Activated T-helper 1 cell treated with anti-CD3 and anti-CD28 coated beads, Interleukin-12 subunit alpha, Interleukin-12 subunit beta, Interleukin-2, Interleukin-4 antibody, amounts not matched to agents 30 ng/mL and 10 ng/mL and 1 ng/mL, durations not matched to agents 14 hours and 24 hours and 36 hours (primary cell): ENCODE measurements at regions of chr11 and their contacts with region 1.

Region 1: GRCh38 chr11:124758317-124759203 is 3.5 kb downstream of the ESAM start:
- DNase-seq: peak; percentile 59
- H3K4me3 Mint-ChIP-seq: peak overlapping the region; percentile 61
- H3K27ac Mint-ChIP-seq: no peak overlapping the region
- H3K4me1 Mint-ChIP-seq: peaks cover 19% of the 10 kb centered on the region
- H3K27me3 Mint-ChIP-seq: peaks cover 57% of the 10 kb centered on the region

Region 2: DNA sequence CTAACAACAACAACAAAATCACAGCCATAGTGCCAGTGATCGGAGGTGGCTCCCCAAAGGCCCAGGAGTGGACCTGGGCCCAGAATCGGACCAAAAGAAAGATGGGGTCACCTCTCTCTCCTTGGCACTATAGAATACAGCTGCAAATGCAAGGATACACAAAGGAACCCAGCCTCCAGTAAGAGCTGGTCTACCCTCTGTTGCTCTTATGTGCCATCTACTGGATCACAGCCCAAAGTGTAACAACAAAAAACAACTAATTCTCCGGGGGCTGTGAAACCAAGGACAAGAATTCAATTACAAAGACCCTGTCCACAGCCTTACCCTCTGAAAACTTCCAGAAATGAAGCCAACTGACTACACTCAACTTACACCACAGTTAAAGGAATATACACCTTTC is 480.8 kb before region 1 on chr11:
- intact Hi-C with region 1: no loop called
- DNase-seq: no peak
- H3K4me3 Mint-ChIP-seq: no peak overlapping the region
- H3K27ac Mint-ChIP-seq: no peak overlapping the region
- H3K4me1 Mint-ChIP-seq: peaks cover 8% of the 10 kb centered on the region
- H3K27me3 Mint-ChIP-seq: no peaks in the 10 kb centered on the region

Region 3: DNA sequence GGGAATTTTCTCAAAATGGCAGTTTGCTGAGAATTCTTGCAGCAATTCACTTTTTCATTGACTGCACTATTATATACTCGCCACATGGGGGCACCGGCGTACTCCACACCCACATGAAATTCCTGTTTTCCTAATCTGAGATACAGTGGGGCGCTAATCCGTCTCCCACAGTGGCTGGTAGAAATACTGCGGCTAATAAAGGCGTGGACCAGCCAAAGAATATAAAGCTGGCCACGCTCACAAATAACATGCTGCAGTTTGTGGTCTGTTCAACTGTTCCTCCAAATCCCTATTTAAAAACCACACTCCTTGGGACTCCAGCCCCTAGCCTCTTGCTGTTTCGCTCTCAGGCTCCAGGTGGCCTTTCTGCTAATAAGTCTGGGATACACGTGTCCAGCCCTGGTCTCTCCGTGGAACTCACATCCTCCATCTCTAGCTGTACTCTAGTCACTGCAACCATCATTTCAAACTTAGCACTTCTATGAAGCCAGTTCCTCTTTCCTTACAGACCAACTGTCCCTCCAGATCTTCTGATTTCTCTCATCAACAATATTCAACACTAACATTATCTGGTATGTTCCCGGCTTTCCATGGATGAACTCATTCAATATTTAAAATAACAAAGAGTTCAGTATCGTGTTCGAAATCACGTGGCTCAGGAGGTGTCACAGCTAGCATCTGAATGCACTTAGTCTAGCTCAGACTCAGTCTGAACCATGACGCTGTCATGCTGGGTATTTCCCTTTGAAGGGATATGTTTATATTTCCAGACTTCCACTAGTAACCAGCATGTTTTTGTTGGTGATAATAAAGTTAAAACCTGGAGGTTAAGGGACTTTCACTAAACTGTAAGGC is 113.9 kb before region 1 on chr11:
- intact Hi-C with region 1: loop called (anchors 1 kb)
- DNase-seq: no peak
- H3K4me3 Mint-ChIP-seq: no peak overlapping the region
- H3K27ac Mint-ChIP-seq: no peak overlapping the region
- H3K4me1 Mint-ChIP-seq: peaks cover 8% of the 10 kb centered on the region
- H3K27me3 Mint-ChIP-seq: no peaks in the 10 kb centered on the region

Region 4: DNA sequence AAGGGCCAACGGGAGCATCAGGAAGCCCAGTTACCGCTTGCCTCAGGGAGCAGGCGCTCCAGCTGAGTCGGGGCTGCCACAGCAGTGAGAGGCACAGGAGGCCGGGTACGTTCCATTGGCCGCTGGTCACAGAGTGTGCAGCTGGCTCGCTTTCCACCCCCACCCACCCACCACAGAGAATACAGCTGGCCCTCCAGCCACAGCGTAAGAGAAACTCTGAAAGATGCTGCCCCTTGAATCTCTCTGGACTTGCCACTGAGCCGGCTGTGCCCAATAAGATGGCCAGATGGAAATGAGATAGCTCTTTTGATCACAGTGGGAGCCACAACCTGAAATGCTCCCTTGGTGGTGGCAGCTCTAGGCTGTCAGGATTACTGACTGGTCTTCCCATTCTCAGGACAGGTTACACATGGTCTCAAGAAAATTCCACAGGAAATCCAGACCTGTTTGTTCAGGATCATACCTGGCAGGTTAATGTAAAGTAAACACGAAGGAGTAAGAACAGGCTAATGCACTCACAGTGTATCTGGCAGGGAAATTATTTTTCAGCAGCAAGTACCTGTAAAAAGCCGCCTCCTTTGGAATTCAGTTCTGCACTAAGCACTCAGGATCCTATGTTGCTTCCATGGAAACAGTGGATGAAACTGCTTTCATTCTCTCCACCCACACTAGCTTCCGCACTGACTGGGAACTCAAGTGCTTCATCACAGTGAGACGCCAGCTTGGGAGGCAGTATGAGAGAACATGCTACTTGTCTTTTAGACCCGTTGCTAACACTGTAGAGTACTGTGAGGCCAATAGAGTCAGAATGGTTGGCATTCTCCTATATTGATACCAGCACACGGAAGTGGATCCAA is 101.6 kb before region 1 on chr11:
- intact Hi-C with region 1: no loop called
- DNase-seq: no peak
- H3K4me3 Mint-ChIP-seq: no peak overlapping the region
- H3K27ac Mint-ChIP-seq: no peak overlapping the region
- H3K4me1 Mint-ChIP-seq: no peaks in the 10 kb centered on the region
- H3K27me3 Mint-ChIP-seq: no peaks in the 10 kb centered on the region

Region 5: DNA sequence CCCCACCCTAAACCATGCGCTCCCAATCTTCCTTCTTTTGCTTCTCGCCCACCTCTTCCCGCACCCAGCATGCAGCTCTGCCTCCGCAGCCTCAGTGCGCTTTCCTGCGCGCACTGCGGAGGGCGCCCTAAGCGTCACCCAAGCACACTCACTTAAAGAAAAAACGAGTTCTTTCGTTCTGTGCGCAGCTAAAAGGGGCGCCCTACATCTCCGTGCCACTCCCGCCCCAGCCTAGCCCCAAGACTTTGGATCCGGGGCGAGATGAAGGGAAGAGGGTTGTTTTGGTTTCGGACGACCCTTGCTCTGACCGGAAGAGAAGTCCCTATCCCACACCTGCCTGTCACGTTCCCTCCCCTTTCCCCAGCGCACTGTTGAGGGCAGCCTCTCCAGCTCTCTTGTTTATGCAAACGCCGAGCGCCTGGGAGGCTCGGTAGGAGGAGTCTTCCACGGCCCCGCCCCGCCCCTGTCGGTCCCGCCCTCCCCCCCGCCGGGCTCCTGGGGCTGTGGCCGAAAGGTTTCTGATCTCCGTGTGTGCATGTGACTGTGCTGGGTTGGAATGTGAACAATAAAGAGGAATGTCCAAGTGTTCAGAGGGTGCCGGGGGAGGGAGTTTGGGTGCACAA is 11.8 kb before region 1 on chr11:
- intact Hi-C with region 1: loop called (anchors 1 kb)
- DNase-seq: peak; percentile 64
- H3K4me3 Mint-ChIP-seq: peak overlapping the region; percentile 89
- H3K27ac Mint-ChIP-seq: peak overlapping the region; percentile 86
- H3K4me1 Mint-ChIP-seq: peaks cover 28% of the 10 kb centered on the region
- H3K27me3 Mint-ChIP-seq: peaks cover 12% of the 10 kb centered on the region

Region 6: GRCh38 chr11:124800226-124800929 is 41.8 kb after region 1 on chr11 and contains the start of gene MSANTD2:
- intact Hi-C with region 1: loop called (anchors 1 kb)
- DNase-seq: peak; percentile 79
- H3K4me3 Mint-ChIP-seq: peak within 1 kb of the TSS; percentile 91
- H3K27ac Mint-ChIP-seq: peak within 1 kb of the TSS; percentile 92
- H3K4me1 Mint-ChIP-seq: peaks cover 28% of the 10 kb centered on the region
- H3K27me3 Mint-ChIP-seq: peaks cover 8% of the 10 kb centered on the region
- total RNA-seq, gene MSANTD2: 8.9 and 9.7 TPM in 2 replicates